Endothelial cell of umbilical vein (primary cell): ENCODE measurements at regions of chr13 and their contacts with region 1.

Region 1: DNA sequence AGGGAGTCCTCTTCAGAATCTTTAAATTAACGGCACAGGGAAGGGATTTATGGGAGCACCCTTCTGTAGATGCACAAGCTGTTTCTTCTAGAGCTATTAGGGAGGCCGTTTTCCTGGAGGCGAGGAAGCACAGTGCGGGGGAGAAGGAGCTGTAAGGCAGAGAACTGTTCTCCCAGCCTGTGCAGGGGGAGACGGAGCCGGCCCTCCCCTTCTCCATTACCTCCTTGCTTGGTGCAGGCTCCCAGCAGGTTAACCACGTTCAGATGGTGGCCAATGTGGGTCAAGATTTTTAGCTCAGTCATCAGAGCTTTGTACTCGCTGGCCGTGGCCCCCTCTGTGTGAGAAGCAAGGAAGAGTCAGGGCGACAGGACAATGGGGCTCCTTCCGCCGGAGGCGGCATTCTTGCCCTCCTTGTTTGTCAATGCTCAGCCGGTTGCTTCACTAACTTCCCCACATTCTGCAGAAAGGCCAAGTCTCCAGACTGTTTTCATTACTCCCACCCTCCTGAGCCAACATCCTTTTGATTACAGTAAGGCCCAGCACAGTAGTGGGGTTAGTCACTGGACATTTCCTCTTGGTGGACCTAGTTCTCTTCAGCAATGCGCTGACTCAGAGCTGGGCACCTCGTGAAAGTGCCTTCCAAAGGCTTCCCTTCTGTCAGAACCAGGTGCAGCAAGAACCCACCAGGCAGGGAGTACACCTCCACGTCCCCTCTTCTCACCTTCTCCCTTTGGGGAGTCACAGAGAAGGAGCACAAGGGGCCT is 165.4 kb downstream of the FLT1 start:
- DNase-seq: peak; percentile 99
- H3K4me3 ChIP-seq: no peak overlapping the region
- H3K27ac ChIP-seq: peak overlapping the region; percentile 98
- H3K4me1 ChIP-seq: peaks cover 57% of the 10 kb centered on the region
- H3K27me3 ChIP-seq: no peaks in the 10 kb centered on the region
- CTCF ChIP-seq: no peak
- POLR2A ChIP-seq: peak; percentile 77

Region 2: DNA sequence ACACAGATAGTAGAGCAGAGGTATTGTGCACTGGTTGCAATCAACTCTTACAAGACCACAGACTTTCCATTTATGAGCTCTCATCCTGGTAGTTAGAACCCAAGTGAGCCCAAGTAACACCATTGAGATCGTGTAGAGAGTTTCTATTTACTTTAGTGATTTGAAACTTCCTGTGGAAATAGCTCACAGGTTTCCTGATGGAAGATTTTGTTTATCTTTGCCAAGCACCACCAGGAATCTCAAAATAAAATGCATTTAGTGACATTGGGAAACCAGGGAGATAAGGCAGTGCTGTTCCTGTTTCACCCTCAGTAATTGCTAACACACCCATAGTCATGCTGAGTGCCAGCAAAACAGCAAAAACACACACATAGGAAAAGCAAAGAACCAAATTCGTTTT is 62.9 kb after region 1 on chr13:
- CTCF ChIA-PET with region 1: interaction called, 9 read pairs
- POLR2A ChIA-PET with region 1: no interaction called
- dilution Hi-C with region 1: no loop called
- intact Hi-C with region 1: loop called (anchors 1 kb)
- DNase-seq: peak; percentile 91
- H3K4me3 ChIP-seq: no peak overlapping the region
- H3K27ac ChIP-seq: peak overlapping the region; percentile 88
- H3K4me1 ChIP-seq: peaks cover 89% of the 10 kb centered on the region
- H3K27me3 ChIP-seq: no peaks in the 10 kb centered on the region
- CTCF ChIP-seq: no peak
- POLR2A ChIP-seq: no peak

Region 3: DNA sequence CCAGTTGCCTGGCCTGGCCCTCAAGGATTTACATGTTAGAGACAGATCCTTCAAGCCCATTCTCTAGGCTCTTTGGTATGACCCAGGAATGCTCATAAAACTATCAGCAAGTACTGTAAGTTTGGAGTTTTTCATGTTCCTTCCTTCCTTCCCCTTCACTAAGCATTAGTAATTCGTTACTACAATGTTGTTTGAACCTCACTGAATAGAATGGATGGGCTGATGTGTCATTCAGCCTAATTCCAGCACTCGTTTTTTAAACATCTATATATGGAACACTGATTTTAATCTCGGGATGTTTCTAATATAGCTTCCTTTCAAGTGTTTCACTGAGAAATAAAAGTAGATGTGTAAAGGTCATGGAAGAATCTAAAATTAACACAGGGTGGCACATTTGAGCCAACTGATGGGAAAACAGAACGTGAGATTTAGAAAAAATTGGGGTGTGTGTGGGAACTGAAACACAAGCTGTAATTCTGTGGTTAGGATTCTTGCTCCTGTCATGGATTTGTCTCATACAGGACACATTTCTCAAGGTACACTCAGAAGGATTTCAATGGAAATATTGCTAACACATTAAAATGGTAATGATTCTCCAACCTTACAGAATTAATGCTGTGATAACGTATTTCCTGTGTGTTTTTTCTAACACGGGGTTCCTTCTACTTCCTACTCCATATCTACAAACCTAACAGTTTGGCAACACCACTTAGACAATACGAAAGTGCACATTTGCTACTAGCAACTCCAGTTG is 71.9 kb after region 1 on chr13:
- CTCF ChIA-PET with region 1: interaction called, 11 read pairs
- POLR2A ChIA-PET with region 1: no interaction called
- dilution Hi-C with region 1: no loop called
- intact Hi-C with region 1: loop called (anchors 1 kb)
- DNase-seq: peak; percentile 93
- H3K4me3 ChIP-seq: peak overlapping the region in 1 of 3 experiments; percentile 30
- H3K27ac ChIP-seq: peak overlapping the region; percentile 99
- H3K4me1 ChIP-seq: peaks cover 54% of the 10 kb centered on the region
- H3K27me3 ChIP-seq: no peaks in the 10 kb centered on the region
- CTCF ChIP-seq: no peak
- POLR2A ChIP-seq: no peak

Region 4: GRCh38 chr13:28468023-28468915 is 138.7 kb after region 1 on chr13:
- CTCF ChIA-PET with region 1: interaction called, 6 read pairs
- POLR2A ChIA-PET with region 1: no interaction called
- dilution Hi-C with region 1: no loop called
- intact Hi-C with region 1: loop called (anchors 1 kb)
- DNase-seq: no peak
- H3K4me3 ChIP-seq: no peak overlapping the region
- H3K27ac ChIP-seq: no peak overlapping the region
- H3K4me1 ChIP-seq: peaks cover 57% of the 10 kb centered on the region
- H3K27me3 ChIP-seq: no peaks in the 10 kb centered on the region
- CTCF ChIP-seq: no peak
- POLR2A ChIP-seq: no peak

Region 5: DNA sequence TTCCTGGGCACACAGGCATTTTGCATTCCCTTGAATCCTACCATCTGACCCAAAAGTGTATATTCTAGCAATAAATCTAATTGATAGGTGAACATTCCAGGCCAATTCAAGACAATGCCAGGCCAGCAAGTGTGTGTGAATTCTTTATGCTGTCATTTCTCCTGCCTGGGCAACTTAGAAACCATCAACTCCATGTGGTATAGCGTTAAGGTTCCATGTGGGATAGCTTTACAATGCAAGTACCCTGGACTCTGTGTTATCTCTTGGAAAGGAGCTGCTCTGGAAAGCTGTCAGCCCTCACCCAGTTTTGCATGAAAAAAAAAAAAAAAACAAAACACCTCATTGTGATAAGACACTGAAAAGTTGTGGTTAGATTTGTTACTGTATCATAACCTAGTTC is 181.0 kb after region 1 on chr13:
- CTCF ChIA-PET with region 1: no interaction called
- POLR2A ChIA-PET with region 1: no interaction called
- dilution Hi-C with region 1: no loop called
- intact Hi-C with region 1: no loop called
- DNase-seq: no peak
- H3K4me3 ChIP-seq: no peak overlapping the region
- H3K27ac ChIP-seq: no peak overlapping the region
- H3K4me1 ChIP-seq: no peaks in the 10 kb centered on the region
- H3K27me3 ChIP-seq: no peaks in the 10 kb centered on the region
- CTCF ChIP-seq: no peak
- POLR2A ChIP-seq: no peak

Region 6: GRCh38 chr13:28531077-28531844 is 201.7 kb after region 1 on chr13:
- CTCF ChIA-PET with region 1: interaction called, 10 read pairs
- POLR2A ChIA-PET with region 1: no interaction called
- dilution Hi-C with region 1: no loop called
- intact Hi-C with region 1: loop called (anchors 2 kb)
- DNase-seq: peak; percentile 85
- H3K4me3 ChIP-seq: peak overlapping the region in 2 of 3 experiments; percentile 45
- H3K27ac ChIP-seq: peak overlapping the region; percentile 36
- H3K4me1 ChIP-seq: peaks cover 14% of the 10 kb centered on the region
- H3K27me3 ChIP-seq: no peaks in the 10 kb centered on the region
- CTCF ChIP-seq: no peak
- POLR2A ChIP-seq: no peak